ENCODE measurements at regions of chr2 and their contacts with region 1.

Region 1: DNA sequence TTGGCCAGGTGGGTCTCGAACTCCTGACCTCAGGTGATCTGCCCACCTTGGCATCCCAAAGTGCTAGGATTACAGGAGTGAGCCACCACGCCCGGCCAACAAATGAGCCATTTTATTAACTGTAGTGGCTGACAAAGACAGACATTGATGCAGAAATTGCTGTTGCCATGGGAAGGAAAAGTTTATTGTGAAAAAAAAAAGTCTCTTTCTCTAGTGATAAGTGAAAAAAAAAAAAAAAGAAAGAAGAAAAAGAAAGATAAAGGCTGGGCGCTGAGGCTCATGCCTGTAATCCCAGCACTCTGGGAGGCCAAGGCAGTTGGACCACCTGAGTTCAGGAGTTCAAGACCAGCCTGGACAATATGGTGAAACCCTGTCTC is 39.8 kb upstream of the RAB1A start:
- DNase-seq: no peak
- H3K4me3 ChIP-seq: no peak overlapping the region
- H3K27ac ChIP-seq: no peak overlapping the region
- H3K4me1 ChIP-seq: peaks cover 22% of the 10 kb centered on the region
- CTCF ChIP-seq: no peak

Region 2: DNA sequence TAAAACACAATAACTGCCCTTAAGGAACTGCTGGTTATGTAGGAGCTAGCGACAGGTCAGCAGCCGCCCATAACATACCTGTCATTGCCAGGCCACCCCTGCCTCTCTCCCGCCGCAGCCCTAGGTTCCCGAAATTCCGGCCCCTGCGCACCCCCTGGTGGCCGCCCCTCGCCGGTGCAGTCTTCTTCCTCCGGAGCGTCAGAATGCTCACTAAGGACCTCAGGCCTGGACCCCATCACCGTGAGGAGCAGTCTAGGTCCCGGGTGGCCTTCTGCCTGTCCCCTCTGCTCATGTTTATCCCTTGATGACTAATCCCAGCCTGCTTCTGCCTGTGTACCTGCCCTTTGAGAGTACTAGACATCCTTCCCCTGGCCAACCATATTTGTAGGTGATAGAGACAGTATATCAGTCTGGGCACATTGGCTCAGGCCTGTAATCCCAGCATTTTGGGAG is 296.2 kb before region 1 on chr2:
- CTCF ChIA-PET with region 1: no interaction called
- POLR2A ChIA-PET with region 1: no interaction called
- intact Hi-C with region 1: loop called (anchors 1 kb)
- DNase-seq: peak; percentile 75
- H3K4me3 ChIP-seq: peak overlapping the region; percentile 28
- H3K27ac ChIP-seq: no peak overlapping the region
- H3K4me1 ChIP-seq: peaks cover 9% of the 10 kb centered on the region
- CTCF ChIP-seq: peak; percentile 98

Region 3: DNA sequence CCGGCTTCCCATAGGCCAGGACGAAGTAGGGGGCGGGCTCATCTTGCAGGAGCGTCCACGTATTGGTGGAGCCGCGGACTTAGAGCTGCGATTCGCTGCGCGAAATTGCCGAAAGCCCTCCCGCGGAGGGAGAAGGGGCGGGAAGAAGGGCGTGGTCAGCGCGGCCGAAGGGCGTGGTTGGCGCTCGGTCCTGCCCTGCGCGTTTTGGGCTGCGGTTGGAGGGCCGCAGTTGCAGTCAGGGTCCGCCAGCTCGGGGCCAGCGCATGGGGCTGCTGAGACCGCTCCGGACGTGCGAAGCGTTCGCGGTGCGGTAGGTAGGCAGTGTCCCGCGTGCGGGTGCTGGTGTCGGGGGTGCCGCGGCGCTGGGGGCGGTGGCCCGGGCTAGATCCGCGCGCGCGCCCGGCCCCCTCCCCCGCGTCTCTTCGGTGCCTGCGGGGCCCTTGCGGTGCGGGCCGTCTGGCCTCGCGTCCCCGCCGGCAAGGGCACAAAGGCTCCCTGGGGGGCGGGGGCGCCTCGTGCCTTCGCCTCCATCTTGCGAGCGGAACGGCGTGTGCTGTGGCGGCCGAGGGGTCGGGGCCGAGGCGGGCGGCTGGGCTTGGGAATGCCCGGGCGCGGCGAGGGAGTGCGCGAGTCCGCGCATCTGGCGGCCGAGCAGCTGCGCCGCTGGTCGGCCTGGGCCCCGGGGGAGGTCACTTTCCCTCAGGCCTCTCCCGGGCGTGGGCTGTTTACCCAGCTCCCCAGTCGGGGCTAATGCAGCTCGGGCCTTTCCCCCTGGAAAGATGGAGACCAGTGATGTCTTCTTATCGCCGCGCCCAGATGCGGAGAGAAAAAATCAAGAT is 113.3 kb before region 1 on chr2 and contains the start of gene CEP68:
- CTCF ChIA-PET with region 1: interaction called, 11 read pairs
- POLR2A ChIA-PET with region 1: interaction called, 16 read pairs
- intact Hi-C with region 1: no loop called
- DNase-seq: peak; percentile 99
- H3K4me3 ChIP-seq: peak within 1 kb of the TSS; percentile 82
- H3K27ac ChIP-seq: peak within 1 kb of the TSS; percentile 56
- H3K4me1 ChIP-seq: peaks cover 68% of the 10 kb centered on the region
- CTCF ChIP-seq: no peak
- total RNA-seq, gene CEP68: 7.3 and 8.7 TPM in 2 replicates

Region 4: GRCh38 chr2:65064728-65065552 is 104.8 kb before region 1 on chr2:
- CTCF ChIA-PET with region 1: interaction called, 28 read pairs
- POLR2A ChIA-PET with region 1: interaction called, 22 read pairs
- intact Hi-C with region 1: loop called (anchors 1 kb)
- DNase-seq: peak; percentile 88
- H3K4me3 ChIP-seq: peak overlapping the region; percentile 43
- H3K27ac ChIP-seq: peak overlapping the region; percentile 67
- H3K4me1 ChIP-seq: peaks cover 46% of the 10 kb centered on the region
- CTCF ChIP-seq: peak; percentile 89

Region 5: GRCh38 chr2:65070172-65070830 is 99.4 kb before region 1 on chr2:
- CTCF ChIA-PET with region 1: interaction called, 28 read pairs
- POLR2A ChIA-PET with region 1: interaction called, 22 read pairs
- intact Hi-C with region 1: loop called (anchors 1 kb)
- DNase-seq: peak; percentile 76
- H3K4me3 ChIP-seq: peak overlapping the region; percentile 15
- H3K27ac ChIP-seq: peak overlapping the region; percentile 83
- H3K4me1 ChIP-seq: peaks cover 78% of the 10 kb centered on the region
- CTCF ChIP-seq: 0 out of 2 replicates have a peak, but pooled peaks have one; percentile 28

Region 6: GRCh38 chr2:65129826-65130663 is 39.7 kb before region 1 on chr2 and contains the start of gene RAB1A:
- CTCF ChIA-PET with region 1: interaction called, 4 read pairs
- POLR2A ChIA-PET with region 1: interaction called, 12 read pairs
- intact Hi-C with region 1: loop called (anchors 2 kb)
- DNase-seq: peak; percentile 100
- H3K4me3 ChIP-seq: peak within 1 kb of the TSS; percentile 93
- H3K27ac ChIP-seq: peak within 1 kb of the TSS; percentile 58
- H3K4me1 ChIP-seq: peaks cover 28% of the 10 kb centered on the region
- CTCF ChIP-seq: peak; percentile 35
- total RNA-seq, gene RAB1A: 37.3 and 39.7 TPM in 2 replicates

Region 7: GRCh38 chr2:65156041-65156440 is 13.7 kb before region 1 on chr2:
- CTCF ChIA-PET with region 1: no interaction called
- POLR2A ChIA-PET with region 1: interaction called, 13 read pairs
- intact Hi-C with region 1: no loop called
- DNase-seq: no peak
- H3K4me3 ChIP-seq: no peak overlapping the region
- H3K27ac ChIP-seq: no peak overlapping the region
- H3K4me1 ChIP-seq: peaks cover 29% of the 10 kb centered on the region
- CTCF ChIP-seq: no peak

Region 8: DNA sequence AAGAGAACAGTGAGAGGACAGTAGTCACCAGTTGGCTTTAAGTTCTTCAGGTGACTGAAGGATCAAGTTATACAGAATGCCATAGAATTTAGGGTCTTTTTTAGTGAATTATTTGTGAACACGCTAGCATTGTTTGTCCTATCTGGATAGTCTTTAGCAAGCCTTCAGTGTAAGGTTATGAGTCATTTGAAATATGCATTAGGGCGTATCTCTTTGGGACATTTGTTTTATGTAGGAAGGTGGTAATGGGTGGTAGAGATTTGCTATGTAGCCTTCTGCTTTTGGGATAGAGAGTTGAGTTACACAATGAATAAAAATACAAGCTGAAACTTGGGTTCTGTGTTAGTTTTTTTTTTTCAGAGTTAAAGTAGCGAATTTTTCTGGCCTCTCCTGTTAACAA is 70.9 kb after region 1 on chr2:
- CTCF ChIA-PET with region 1: no interaction called
- POLR2A ChIA-PET with region 1: no interaction called
- intact Hi-C with region 1: no loop called
- DNase-seq: no peak
- H3K4me3 ChIP-seq: no peak overlapping the region
- H3K27ac ChIP-seq: no peak overlapping the region
- H3K4me1 ChIP-seq: no peaks in the 10 kb centered on the region
- CTCF ChIP-seq: no peak

Measured in OCI-LY7 (cell line).